K562 (cell line): ENCODE measurements at regions of chr2 and their contacts with region 1.

Region 1: DNA sequence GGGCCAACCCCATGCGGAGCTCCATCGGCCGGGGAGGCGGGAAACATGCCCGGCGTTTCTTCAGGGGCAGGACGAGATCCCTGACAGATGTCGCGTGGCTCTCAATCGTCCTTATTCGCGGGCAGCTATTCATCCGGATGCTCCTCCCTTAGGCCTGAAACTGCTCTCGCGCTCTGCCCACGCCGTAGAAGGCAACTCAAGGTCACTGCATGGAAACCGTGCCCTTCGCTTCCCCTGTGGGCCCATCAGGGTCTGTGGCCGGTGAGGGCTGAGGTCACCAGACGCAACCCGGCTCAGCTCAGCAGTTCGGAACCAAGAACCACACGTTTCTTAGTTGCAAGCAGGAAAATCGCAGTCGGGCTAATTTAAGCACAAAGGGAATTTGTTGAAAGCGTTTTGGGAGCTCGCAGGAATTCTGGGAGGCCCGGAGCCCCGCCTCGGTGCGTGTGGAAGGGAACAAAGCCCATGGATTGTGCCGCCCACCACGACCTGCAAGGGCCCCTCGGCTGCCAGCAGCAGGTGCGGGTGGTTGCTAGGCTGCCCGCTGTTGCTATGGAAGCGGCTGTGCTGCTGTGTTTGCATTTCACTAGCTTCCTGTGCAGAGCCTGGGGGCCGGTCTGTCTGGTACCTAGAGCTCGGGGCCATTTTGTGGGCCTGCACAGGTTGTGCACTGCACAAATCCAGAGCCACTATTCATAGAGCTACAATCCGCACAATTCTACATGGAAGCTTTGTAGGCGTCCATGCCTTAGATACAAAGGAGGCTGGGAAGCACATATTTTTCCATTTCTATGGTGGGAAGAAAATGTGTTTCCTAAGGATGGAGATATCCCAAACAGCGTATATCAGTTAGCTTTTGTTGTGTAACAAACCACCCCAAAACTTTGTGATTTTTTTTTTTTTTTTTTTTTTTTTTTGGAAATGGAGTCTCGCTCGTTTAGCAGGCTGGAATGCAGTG is 6.0 kb upstream of the ALLC start:
- DNase-seq: no peak
- ATAC-seq: no peak
- H3K4me3 ChIP-seq: no peak overlapping the region
- H3K27ac ChIP-seq: no peak overlapping the region
- H3K4me1 ChIP-seq: peaks cover 0 to 28% of the 10 kb centered on the region in 2 experiments; a peak in 3 of 5 replicates
- H3K27me3 ChIP-seq: peaks cover 54 to 92% of the 10 kb centered on the region in 2 experiments
- CTCF ChIP-seq: no peak
- EP300 ChIP-seq: no peak
- POLR2A ChIP-seq: no peak
- RAD21 ChIP-seq: no peak

Region 2: DNA sequence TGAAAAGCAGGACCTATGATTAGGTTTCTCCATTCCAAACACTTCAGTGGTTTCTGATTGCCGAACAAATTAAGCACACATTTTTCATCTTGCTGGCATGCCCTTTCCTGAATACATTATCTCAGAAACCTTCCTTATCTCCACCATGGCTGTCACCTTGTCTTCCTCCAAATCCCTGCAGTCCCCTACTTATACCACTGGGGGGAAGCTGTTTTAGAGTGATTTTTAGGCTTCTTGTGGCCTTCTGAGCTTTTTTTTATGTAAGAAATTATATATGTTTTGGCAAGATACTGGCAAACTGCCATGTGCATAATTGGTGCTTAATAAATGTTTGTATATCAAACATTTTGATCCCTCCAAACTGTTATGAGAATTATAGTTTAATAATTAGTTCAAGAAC is 1550.0 kb before region 1 on chr2:
- CTCF ChIA-PET with region 1: no interaction called
- POLR2A ChIA-PET with region 1: no interaction called
- in situ Hi-C with region 1: loop called (anchors 25 kb)
- intact Hi-C with region 1: no loop called
- DNase-seq: peak; percentile 21 to 47 (median 38)
- ATAC-seq: peak; percentile 61; the same call in 1 of the 3 replicates
- H3K4me3 ChIP-seq: no peak overlapping the region
- H3K27ac ChIP-seq: no peak overlapping the region
- H3K4me1 ChIP-seq: no peaks in the 10 kb centered on the region
- H3K27me3 ChIP-seq: peaks cover 0 to 8% of the 10 kb centered on the region in 2 experiments; a peak in 2 of 5 replicates
- CTCF ChIP-seq: peak in 2 of 3 experiments; percentile 24 to 34; a peak in 2 of 6 replicates
- EP300 ChIP-seq: no peak
- POLR2A ChIP-seq: no peak
- RAD21 ChIP-seq: no peak

Region 3: DNA sequence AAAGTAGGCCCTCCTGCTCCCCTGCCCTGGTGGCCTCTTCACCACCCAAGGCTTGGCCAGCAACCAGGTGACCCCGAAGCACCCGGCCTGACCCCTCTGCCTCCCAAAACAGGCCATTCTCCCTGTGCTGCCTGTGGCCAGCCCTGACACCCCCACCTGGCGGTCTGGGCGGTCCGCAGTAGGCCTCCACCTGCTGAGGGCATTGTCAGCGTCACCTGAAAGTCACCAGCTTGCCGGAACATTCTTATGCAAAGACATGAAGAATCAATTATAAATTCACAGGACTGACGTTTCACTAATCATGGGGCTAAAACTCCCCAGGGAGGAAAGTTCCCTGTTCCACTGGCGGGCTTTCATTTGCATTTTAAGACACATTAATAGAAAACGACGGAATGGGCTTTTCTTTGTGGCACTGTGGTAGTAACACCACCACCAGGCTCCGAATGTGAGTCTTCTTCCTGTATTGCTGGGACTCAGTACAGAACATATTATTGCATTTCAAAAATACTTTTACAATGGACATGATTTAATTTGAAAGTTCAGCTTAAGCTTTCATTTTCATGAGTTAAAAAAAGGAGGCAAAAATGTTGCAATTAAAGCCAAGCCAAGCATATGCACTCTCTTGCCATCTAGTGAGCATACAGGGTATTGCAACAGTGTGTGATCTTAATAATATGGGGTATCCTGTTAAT is 190.0 kb before region 1 on chr2:
- CTCF ChIA-PET with region 1: interaction called, 3 read pairs
- POLR2A ChIA-PET with region 1: no interaction called
- in situ Hi-C with region 1: no loop called
- intact Hi-C with region 1: loop called (anchors 2 kb)
- DNase-seq: peak; percentile 62 to 71 (median 68)
- ATAC-seq: peak; percentile 70
- H3K4me3 ChIP-seq: no peak overlapping the region
- H3K27ac ChIP-seq: no peak overlapping the region
- H3K4me1 ChIP-seq: peaks cover 8 to 39% of the 10 kb centered on the region in 2 experiments; a peak in 4 of 5 replicates
- H3K27me3 ChIP-seq: no peaks in the 10 kb centered on the region
- CTCF ChIP-seq: peak; percentile 57 to 88 (median 74); a peak in 5 of 6 replicates
- EP300 ChIP-seq: no peak
- POLR2A ChIP-seq: no peak
- RAD21 ChIP-seq: peak; percentile 55 to 81

Region 4: DNA sequence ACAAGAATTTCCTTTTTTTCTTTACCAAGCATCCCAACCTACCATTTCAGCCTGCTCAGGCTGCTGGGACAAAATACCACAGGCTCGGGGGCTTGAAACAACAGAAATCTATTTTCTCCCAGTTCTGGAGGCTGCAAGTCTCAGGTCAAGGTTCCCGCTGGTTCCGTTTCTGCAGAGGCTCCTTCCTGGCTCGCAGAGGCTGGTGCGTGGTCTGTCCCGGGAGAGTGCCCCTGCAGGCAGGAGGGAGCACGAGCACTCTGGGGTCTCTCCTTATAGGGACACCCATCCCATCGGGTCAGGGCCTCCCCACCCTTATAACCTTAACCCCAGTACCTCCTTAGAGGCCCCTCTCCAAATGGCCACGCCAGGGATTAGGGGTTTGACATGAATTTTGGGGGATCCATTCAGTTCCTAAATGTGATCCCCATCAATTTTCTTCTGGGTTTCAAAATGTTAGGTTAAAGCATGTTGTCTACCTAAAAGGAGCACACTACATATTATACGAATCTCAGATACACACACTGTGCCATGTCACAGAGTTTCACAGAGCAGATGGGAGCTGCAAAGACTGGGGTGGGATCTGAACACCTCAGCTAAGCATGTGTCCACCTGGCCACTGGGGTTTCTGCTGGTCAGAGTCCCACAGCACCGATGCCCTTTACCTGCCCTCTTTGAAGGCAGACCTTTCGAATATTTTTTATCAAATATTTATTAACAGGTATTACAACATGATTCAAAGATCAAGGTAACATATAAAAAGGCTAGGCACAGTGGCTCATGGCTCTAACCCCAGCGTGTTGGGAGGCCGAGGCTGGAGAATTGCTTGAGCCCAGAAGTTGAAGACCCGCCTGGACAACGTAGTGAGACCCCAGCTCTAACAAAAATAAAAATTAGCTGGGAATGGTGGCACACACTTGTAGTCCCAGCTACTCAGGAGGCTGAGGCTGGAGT is 115.0 kb before region 1 on chr2:
- CTCF ChIA-PET with region 1: interaction called, 3 read pairs
- POLR2A ChIA-PET with region 1: no interaction called
- in situ Hi-C with region 1: no loop called
- intact Hi-C with region 1: loop called (anchors 5 kb)
- DNase-seq: peak; percentile 75 to 83 (median 79)
- ATAC-seq: peak; percentile 93
- H3K4me3 ChIP-seq: peak overlapping the region; percentile 40
- H3K27ac ChIP-seq: peak overlapping the region; percentile 86
- H3K4me1 ChIP-seq: peaks cover 9 to 18% of the 10 kb centered on the region in 2 experiments; a peak in 4 of 5 replicates
- H3K27me3 ChIP-seq: no peaks in the 10 kb centered on the region
- CTCF ChIP-seq: peak; percentile 69 to 77 (median 70)
- EP300 ChIP-seq: no peak
- POLR2A ChIP-seq: no peak
- RAD21 ChIP-seq: peak in 1 of 2 experiments; percentile 51; a peak in 2 of 4 replicates

Region 5: GRCh38 chr2:3594493-3595281 is 57.3 kb before region 1 on chr2 and contains the start of gene COLEC11:
- CTCF ChIA-PET with region 1: no interaction called
- POLR2A ChIA-PET with region 1: no interaction called
- in situ Hi-C with region 1: no loop called
- intact Hi-C with region 1: loop called (anchors 2 kb)
- DNase-seq: peak; percentile 56 to 85 (median 71)
- ATAC-seq: peak; percentile 98
- H3K4me3 ChIP-seq: no peak within 1 kb of the TSS
- H3K27ac ChIP-seq: no peak within 1 kb of the TSS
- H3K4me1 ChIP-seq: peaks cover 22 to 36% of the 10 kb centered on the region in 2 experiments; a peak in 4 of 5 replicates
- H3K27me3 ChIP-seq: no peaks in the 10 kb centered on the region
- CTCF ChIP-seq: peak; percentile 59 to 72 (median 64)
- EP300 ChIP-seq: 0 out of 2 replicates have a peak, but pooled peaks have one; percentile 4
- POLR2A ChIP-seq: no peak
- RAD21 ChIP-seq: peak; percentile 41 to 72
- polyA plus RNA-seq, gene COLEC11: 0.32 to 0.73 TPM

Region 6: GRCh38 chr2:3632031-3632659 is 19.8 kb before region 1 on chr2:
- CTCF ChIA-PET with region 1: no interaction called
- POLR2A ChIA-PET with region 1: no interaction called
- in situ Hi-C with region 1: no loop called
- intact Hi-C with region 1: no loop called
- DNase-seq: no peak
- ATAC-seq: no peak
- H3K4me3 ChIP-seq: no peak overlapping the region
- H3K27ac ChIP-seq: no peak overlapping the region
- H3K4me1 ChIP-seq: peaks cover 0 to 14% of the 10 kb centered on the region in 2 experiments; a peak in 2 of 5 replicates
- H3K27me3 ChIP-seq: peaks cover 39 to 68% of the 10 kb centered on the region in 2 experiments
- CTCF ChIP-seq: no peak
- EP300 ChIP-seq: no peak
- POLR2A ChIP-seq: no peak
- RAD21 ChIP-seq: no peak

Region 7: GRCh38 chr2:3970791-3971652 is 319.1 kb after region 1 on chr2:
- CTCF ChIA-PET with region 1: no interaction called
- POLR2A ChIA-PET with region 1: no interaction called
- in situ Hi-C with region 1: no loop called
- intact Hi-C with region 1: no loop called
- DNase-seq: no peak
- ATAC-seq: no peak
- H3K4me3 ChIP-seq: no peak overlapping the region
- H3K27ac ChIP-seq: no peak overlapping the region
- H3K4me1 ChIP-seq: no peaks in the 10 kb centered on the region
- H3K27me3 ChIP-seq: no peaks in the 10 kb centered on the region
- CTCF ChIP-seq: no peak
- EP300 ChIP-seq: no peak
- POLR2A ChIP-seq: no peak
- RAD21 ChIP-seq: no peak